ENCODE measurements at regions of chr11 and their contacts with region 1.

Region 1: GRCh38 chr11:121591405-121592033 is 138.8 kb upstream of the SORL1-AS1 start:
- DNase-seq: peak; percentile 73
- H3K4me3 ChIP-seq: no peak overlapping the region
- H3K27ac ChIP-seq: no peak overlapping the region
- H3K4me1 ChIP-seq: peaks cover 0 to 13% (median 10%) of the 10 kb centered on the region in 4 donors
- H3K27me3 ChIP-seq: no peaks in the 10 kb centered on the region
- CTCF ChIP-seq: peak; percentile 80 to 89 (median 85)
- EP300 ChIP-seq: no peak
- POLR2A ChIP-seq: no peak

Region 2: GRCh38 chr11:121249039-121249663 is 342.4 kb before region 1 on chr11:
- in situ Hi-C with region 1: loop called in 1 of 4 experiments (anchors 10 kb)
- intact Hi-C with region 1: loop called (anchors 10 kb)
- DNase-seq: no peak
- H3K4me3 ChIP-seq: no peak overlapping the region
- H3K27ac ChIP-seq: no peak overlapping the region
- H3K4me1 ChIP-seq: peaks cover 0 to 4% (median 2%) of the 10 kb centered on the region in 4 donors
- H3K27me3 ChIP-seq: peaks cover 5% of the 10 kb centered on the region
- CTCF ChIP-seq: peak; percentile 67 to 83 (median 80)
- EP300 ChIP-seq: no peak
- POLR2A ChIP-seq: no peak

Region 3: DNA sequence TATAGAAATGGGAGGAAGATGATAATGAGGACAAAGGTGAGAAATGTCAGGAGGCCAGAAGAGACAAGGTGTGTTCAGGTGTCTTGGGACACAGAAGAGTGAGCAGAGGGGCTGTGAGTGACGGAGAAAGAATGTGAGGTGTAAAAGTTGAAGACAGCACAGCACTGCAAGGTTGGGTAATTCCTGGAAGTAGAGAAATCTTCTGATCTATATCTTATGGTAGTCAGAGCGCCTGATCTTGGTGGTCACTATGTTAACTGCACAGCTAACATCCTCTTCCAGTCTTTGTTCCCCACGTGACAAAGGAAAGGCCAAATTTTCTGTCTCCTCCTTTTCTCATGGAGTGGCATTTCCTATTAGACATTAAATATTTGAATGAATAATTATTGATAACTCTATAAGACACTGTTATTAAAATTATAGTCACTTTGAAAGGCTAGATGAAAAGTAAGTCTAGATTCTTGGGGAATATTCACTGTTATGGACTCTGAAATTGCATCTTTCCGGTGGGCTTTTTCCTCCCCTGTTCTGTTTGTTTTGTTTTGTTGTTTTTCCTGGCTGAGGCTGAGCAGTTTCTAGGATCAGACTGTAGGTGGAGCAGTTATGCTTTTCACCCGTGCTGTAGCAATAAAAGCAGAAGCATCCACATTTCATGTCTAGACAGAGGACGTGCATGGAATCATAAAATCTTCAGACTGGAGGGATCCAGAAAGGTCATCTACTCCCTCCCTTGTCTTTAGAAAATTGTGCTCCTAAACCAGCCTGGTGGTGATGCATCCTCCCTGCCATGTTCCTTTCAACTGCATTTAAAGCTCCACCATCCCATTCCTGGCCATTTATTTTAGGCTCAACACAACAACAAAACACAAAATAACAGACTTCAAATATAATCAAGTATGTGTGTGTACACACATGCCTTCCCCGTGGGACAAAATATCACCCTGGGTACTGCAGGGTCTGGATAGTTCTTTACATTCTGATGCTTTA is 272.4 kb before region 1 on chr11:
- in situ Hi-C with region 1: loop called (anchors 5 to 10 kb)
- intact Hi-C with region 1: loop called (anchors 1 kb)
- DNase-seq: no peak
- H3K4me3 ChIP-seq: no peak overlapping the region
- H3K27ac ChIP-seq: no peak overlapping the region
- H3K4me1 ChIP-seq: peaks cover 0 to 4% (median 0%) of the 10 kb centered on the region in 4 donors
- H3K27me3 ChIP-seq: no peaks in the 10 kb centered on the region
- CTCF ChIP-seq: peak; percentile 67 to 90 (median 80)
- EP300 ChIP-seq: no peak
- POLR2A ChIP-seq: no peak